ENCODE measurements at regions of chr9 and their contacts with region 1.

Region 1: GRCh38 chr9:32968101-32969011 is 33.1 kb downstream of the APTX start:
- DNase-seq: no peak
- ATAC-seq: no peak
- H3K4me3 ChIP-seq: no peak overlapping the region
- H3K27ac ChIP-seq: no peak overlapping the region
- H3K4me1 ChIP-seq: no peaks in the 10 kb centered on the region
- H3K27me3 ChIP-seq: no peaks in the 10 kb centered on the region

Region 2: DNA sequence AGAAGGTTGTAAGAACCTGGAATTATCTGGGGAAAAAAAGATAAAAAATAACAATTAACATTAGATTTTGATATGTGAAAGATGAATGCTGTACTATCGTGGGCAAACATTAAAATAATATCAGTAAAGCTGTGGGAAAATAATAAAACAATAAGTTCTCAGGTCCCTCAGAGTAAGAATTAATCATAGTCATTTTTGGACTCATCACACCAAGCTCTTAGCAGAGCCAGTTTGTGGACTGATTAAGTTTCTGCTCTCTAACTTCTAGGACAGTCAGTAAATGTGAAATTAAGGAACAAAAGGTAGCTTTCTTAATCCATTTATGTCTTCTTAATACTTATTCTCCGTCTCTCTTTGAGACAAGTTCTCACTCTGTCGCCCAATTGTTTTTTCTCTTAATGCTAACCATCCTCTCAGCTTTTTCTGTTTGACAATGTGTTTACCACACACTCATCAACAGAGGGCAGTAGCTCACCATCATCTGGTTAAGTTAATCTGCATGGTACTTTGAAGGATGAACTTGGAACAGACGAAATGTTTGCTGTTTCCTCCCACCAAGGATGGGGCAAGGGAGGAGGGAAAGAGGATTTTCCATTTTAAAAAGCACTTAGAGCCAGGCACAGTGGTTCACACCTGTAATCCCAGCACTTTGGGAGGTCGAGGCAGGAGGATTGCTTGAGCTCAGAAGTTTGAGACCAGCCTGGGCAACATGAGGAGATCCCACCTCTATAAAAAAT is 589.2 kb before region 1 on chr9:
- intact Hi-C with region 1: loop called (anchors 2 to 10 kb)
- DNase-seq: no peak
- ATAC-seq: peak; percentile 92
- H3K4me3 ChIP-seq: no peak overlapping the region
- H3K27ac ChIP-seq: no peak overlapping the region
- H3K4me1 ChIP-seq: no peaks in the 10 kb centered on the region
- H3K27me3 ChIP-seq: no peaks in the 10 kb centered on the region

Region 3: DNA sequence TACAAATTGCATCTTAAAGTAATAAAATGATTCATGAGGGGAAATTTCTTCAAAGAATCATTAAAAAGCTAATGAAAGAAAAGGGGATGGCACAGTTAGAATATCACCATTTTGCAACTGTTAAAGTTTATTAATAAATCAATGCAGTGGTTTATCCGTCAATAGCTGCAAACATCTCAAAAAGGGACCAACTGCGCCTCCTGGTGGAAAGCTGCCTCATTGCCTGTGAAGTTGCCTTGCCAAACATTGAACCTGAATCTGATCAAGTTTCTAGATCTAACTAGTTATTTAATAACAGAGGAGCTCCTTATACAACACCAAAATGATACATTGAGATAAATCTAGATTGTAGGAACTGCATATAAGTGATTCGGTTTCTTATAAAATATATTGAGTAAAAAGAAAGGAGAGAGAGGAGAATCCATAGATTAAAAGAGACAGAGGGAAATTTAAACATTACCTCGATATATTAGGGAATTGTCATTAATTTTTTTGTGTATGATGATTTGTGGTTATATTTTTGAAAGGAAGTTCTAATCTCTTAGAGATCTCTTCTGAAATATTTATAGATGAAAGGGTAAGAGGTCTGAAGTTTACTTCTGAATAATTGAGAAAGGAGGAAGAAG is 388.5 kb before region 1 on chr9:
- intact Hi-C with region 1: loop called in 1 of 2 experiments (anchors 2 kb)
- DNase-seq: peak; percentile 70 to 91
- ATAC-seq: no peak
- H3K4me3 ChIP-seq: no peak overlapping the region
- H3K27ac ChIP-seq: no peak overlapping the region
- H3K4me1 ChIP-seq: no peaks in the 10 kb centered on the region
- H3K27me3 ChIP-seq: no peaks in the 10 kb centered on the region

Region 4: GRCh38 chr9:32589083-32589723 is 379.2 kb before region 1 on chr9:
- intact Hi-C with region 1: loop called in 1 of 2 experiments (anchors 2 kb)
- DNase-seq: no peak
- ATAC-seq: no peak
- H3K4me3 ChIP-seq: no peak overlapping the region
- H3K27ac ChIP-seq: no peak overlapping the region
- H3K4me1 ChIP-seq: no peaks in the 10 kb centered on the region
- H3K27me3 ChIP-seq: no peaks in the 10 kb centered on the region

Region 5: DNA sequence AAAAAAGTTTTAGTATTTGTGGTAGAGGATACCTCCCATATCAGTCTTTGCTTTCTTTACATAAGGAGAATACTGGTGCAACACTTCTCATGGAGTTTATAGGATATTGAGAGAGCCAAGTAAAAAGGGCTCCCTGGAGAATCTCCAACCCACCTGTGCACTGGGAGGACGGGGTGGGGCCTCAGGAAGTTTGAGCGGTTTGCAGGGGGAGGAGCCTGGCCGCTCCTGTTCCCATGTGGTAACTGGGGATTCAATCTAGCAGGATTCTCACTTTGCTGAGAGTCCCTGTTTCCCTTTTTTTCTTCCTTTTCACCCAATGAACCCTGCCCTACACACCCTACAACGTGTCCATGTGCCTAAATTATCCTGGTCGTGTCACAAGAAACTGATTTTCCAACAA is 49.7 kb before region 1 on chr9:
- intact Hi-C with region 1: no loop called
- DNase-seq: no peak
- ATAC-seq: no peak
- H3K4me3 ChIP-seq: no peak overlapping the region
- H3K27ac ChIP-seq: no peak overlapping the region
- H3K4me1 ChIP-seq: no peaks in the 10 kb centered on the region
- H3K27me3 ChIP-seq: no peaks in the 10 kb centered on the region

Region 6: GRCh38 chr9:33051144-33051543 is 82.8 kb after region 1 on chr9:
- intact Hi-C with region 1: no loop called
- DNase-seq: no peak
- ATAC-seq: no peak
- H3K4me3 ChIP-seq: no peak overlapping the region
- H3K27ac ChIP-seq: no peak overlapping the region
- H3K4me1 ChIP-seq: no peaks in the 10 kb centered on the region
- H3K27me3 ChIP-seq: no peaks in the 10 kb centered on the region

Region 7: GRCh38 chr9:33446946-33447798 is 478.8 kb after region 1 on chr9 and contains the start of gene AQP3:
- intact Hi-C with region 1: no loop called
- DNase-seq: peak; percentile 81 to 88
- ATAC-seq: peak; percentile 87
- H3K4me3 ChIP-seq: peak within 1 kb of the TSS; percentile 24 to 68
- H3K27ac ChIP-seq: no peak within 1 kb of the TSS
- H3K4me1 ChIP-seq: no peaks in the 10 kb centered on the region
- H3K27me3 ChIP-seq: no peaks in the 10 kb centered on the region
- total RNA-seq, gene AQP3: 2.8 to 6.0 TPM

Measured in aorta (tissue), 5 donors.